Right ventricle myocardium superior (tissue), 1 donor: ENCODE measurements at regions of chr2 and their contacts with region 1.

Region 1: DNA sequence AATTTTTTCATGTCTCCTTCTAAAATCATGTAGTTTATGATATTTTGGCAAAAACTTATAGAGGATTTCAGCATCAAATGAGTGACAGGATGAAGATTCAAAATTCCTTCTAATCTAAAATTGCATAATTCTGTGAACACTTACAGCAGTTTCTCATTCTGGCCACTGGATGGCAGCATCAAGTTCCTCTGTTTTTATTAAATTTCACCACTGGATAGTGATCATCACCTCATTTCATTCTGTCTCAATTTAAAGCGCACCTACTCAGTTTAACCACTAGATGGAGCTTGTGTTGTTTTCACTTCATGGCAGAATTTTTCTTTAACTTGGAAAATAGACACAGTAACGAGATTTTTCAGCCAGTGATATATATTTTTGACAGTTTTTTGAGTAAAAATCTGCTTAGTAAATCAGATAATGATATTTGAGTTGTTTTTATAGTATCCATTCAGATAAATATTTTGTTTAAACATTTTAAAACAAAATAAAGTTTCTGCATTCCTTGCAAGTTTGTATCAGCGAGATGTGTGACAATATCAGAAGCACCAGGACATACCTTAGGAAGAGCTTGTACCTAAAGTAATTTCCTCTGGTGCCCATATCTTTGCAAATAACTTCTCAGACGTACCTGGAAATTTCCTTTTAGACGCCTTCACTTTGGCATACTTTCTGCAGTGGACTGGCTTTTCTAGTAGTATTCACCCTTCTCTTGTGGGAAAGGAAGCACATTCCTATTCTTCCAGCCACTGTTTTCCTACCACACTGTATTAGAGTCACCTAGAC is 94.7 kb upstream of the ARHGAP15 start:
- DNase-seq: no peak
- ATAC-seq: peak; percentile 92

Region 2: DNA sequence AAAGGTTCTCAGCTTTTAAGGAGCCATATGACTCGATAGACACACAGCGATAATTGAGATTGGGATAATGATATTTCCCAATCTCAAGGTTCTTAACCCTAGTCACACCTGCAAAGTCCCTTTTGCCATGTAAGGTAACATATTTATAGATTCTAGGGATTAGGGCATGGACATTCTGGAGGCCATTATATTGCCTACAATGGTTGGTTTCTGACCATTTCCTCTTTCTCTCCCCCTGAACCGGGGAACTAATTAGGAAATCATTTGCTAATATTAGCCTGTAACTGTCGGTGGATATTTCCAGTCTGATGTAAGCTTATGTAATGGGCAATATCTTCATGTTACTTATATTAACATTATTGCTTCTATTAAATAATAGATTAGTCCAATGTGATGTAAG is 53.9 kb after region 1 on chr2:
- intact Hi-C with region 1: no loop called
- DNase-seq: no peak
- ATAC-seq: no peak

Region 3: GRCh38 chr2:143259368-143259958 is 225.0 kb after region 1 on chr2:
- intact Hi-C with region 1: loop called (anchors 10 kb)
- DNase-seq: peak; percentile 48
- ATAC-seq: peak; percentile 76